GM13977 (cell line): ENCODE measurements at regions of chr19 and their contacts with region 1.

Region 1: GRCh38 chr19:984165-984967 is at the start of gene WDR18:
- DNase-seq: peak; percentile 100
- CTCF ChIP-seq: peak; percentile 12

Region 2: GRCh38 chr19:850221-850978 is 134.0 kb before region 1 on chr19:
- in situ Hi-C with region 1: loop called (anchors 10 kb)
- DNase-seq: no peak
- CTCF ChIP-seq: no peak